Dorsolateral prefrontal cortex (tissue), 120 donors: ENCODE measurements at regions of chr15 and their contacts with region 1.

Region 1: GRCh38 chr15:31024330-31024729 is 32.9 kb upstream of the MTMR10 start:
- DNase-seq: no peak
- H3K4me3 ChIP-seq: no peak overlapping the region
- H3K27ac ChIP-seq: no peak overlapping the region
- H3K27me3 ChIP-seq: peaks cover 0 to 5% (median 0%) of the 10 kb centered on the region in 45 donors
- CTCF ChIP-seq: no peak

Region 2: DNA sequence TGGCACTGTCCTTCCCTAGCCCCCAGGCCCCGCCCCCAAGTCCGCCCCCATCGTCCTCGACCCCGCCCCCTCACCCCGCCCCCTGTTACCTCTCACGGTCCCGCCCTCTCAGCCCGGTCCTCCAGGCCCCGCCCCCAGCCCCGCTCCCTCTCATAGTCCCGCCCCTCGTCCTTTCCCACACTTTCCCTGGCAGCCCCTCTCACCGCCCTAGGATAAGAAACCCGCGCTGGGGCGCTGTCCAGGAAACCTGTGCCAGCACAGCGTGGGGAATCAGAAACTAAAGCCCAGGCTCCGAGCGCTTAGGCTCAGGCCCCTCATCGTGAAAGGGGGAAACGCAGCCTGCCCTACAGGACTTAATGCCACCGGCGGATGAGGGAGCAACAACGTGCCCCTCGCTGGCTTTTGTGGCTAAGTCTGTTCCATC is 56.3 kb after region 1 on chr15:
- intact Hi-C with region 1: loop called in 1 of 2 experiments (anchors 10 kb)
- DNase-seq: peak in 1 of 10 donors; percentile 12
- H3K4me3 ChIP-seq: peak overlapping the region in 47 of 59 donors; percentile 9 to 61 (median 40)
- H3K27ac ChIP-seq: peak overlapping the region in 3 of 59 donors; percentile 28 to 42 (median 31)
- H3K27me3 ChIP-seq: peaks cover 0 to 6% (median 0%) of the 10 kb centered on the region in 45 donors
- CTCF ChIP-seq: no peak